Activated CD4-positive, alpha-beta memory T cell treated with anti-CD3 and anti-CD28 coated beads for 36 hours (primary cell): ENCODE measurements at regions of chr17 and their contacts with region 1.

Region 1: GRCh38 chr17:58082870-58083490 is at the start of gene DYNLL2:
- DNase-seq: peak; percentile 94
- H3K4me3 Mint-ChIP-seq: peak within 1 kb of the TSS; percentile 84
- H3K27ac Mint-ChIP-seq: peak within 1 kb of the TSS; percentile 81
- H3K4me1 Mint-ChIP-seq: peaks cover 33% of the 10 kb centered on the region
- H3K27me3 Mint-ChIP-seq: no peaks in the 10 kb centered on the region
- total RNA-seq, gene DYNLL2: 24.8 to 26.8 TPM

Region 2: DNA sequence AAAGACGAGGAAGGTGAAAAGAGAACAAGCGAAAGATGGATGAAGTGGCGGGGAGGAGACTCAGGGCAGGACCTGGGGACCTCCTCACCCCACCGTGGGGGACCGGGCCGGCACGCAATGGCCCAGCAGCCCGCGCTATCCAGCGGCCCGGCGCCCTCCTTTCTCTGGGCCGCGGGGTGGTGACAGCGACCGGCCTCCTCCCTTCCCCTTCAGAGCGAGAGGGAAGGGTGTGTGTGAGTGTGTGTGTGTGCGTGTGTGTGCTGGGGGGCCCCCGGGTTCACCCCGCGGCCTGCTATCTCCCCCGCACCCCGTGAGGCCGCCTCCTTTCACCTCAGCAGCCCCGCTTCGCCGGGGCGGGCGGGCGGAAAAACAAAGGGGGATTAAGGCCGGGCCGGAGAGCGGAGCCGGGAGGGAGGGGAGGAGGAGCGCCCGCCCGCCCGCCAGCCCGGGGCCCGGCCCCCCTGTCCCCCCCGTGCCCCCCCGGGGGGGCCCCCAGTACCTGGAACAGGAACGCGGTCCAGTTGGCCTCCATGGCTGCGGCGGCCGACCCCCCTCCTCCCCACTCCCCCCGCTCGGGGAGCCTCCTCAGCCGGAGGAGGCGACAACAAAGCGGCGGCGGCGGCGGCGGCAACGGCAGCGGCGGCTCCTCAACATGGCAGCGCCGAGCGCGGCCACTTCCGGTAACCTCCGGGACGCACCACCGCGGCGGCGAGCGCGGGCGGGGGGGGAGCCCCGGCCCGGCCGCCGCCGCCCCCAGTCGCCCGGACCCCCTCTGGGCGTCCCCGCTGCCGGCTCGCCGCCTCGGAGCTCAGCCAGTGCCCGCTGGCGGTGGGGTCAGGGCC is 95.2 kb before region 1 on chr17 and contains the start of gene VEZF1:
- CTCF ChIA-PET with region 1: no interaction called
- POLR2A ChIA-PET with region 1: no interaction called
- intact Hi-C with region 1: loop called (anchors 5 kb)
- DNase-seq: peak; percentile 82
- H3K4me3 Mint-ChIP-seq: peak within 1 kb of the TSS; percentile 89
- H3K27ac Mint-ChIP-seq: peak within 1 kb of the TSS; percentile 87
- H3K4me1 Mint-ChIP-seq: peaks cover 56% of the 10 kb centered on the region
- H3K27me3 Mint-ChIP-seq: no peaks in the 10 kb centered on the region
- total RNA-seq, gene VEZF1: 26.8 to 29.8 TPM

Region 3: DNA sequence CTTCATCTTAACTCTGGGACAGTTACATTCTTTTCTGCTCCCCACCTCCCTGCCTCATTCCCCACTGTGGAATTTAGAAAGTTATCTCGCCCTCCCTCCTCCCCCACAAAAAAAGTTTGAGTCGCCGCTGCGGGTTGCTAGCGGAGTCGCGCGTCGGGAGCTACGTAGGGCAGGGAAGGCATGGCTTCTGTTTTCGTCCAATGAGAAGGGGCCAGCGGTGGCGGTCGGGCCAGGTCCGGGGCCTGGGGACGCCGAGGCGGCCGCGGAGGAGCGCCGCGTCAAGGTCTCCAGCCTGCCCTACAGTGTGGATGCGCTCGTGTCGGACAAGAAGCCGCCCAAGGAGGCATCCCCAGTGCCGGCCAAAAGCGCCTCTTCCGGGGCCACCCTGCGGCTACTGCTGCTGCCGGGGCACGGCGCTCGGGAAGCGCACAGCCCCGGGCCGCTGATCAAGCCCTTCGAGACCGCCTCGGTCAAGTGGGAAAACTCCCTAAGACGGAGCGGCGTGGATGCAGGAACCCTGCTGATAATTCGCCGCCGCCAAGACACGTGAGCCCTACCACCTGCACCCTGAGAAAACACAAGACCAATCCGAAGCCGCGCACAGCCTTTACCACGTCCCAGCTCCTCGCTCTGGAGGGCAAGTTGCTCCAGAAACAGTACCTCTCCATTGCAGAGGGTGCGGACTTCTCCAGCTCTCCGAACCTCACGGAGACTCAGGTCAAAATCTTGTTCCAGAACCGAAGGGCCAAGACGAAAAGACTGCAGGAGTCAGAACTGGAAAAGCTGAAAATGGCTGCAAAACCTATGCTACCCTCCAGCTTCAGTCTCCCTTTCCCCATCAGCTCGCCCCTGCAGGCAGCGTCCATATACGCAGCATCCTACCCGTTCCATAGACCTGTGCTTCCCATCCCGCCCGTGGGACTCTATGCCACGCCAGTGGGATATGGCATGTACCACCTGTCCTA is 74.1 kb after region 1 on chr17:
- CTCF ChIA-PET with region 1: no interaction called
- POLR2A ChIA-PET with region 1: no interaction called
- intact Hi-C with region 1: loop called (anchors 2 kb)
- DNase-seq: peak; percentile 78
- H3K4me3 Mint-ChIP-seq: peak overlapping the region; percentile 88
- H3K27ac Mint-ChIP-seq: peak overlapping the region; percentile 84
- H3K4me1 Mint-ChIP-seq: peaks cover 47% of the 10 kb centered on the region
- H3K27me3 Mint-ChIP-seq: no peaks in the 10 kb centered on the region